ENCODE measurements at regions of chr16 and their contacts with region 1.

Region 1: DNA sequence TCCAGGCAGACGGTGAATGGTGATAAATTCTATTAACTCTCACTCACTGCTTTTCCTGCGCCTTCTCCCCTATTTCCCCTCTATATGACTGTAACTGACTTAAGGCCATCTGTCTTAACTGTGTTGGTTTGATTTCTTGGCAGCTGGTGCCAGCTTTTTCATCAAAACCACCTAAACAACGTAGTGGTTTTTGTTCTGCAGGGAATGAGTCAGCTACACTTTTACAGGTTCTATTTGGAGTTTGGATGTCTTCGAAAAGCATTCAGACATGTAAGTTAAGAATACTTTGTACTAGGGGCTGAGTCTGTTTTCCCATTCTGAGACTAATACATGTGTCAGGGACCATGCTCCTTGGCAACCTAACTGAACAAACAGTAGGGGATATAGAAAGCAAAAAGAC is 8.5 kb downstream of the REXO5 start:
- DNase-seq: peak; percentile 97
- H3K4me3 ChIP-seq: no peak overlapping the region
- H3K27ac ChIP-seq: peak overlapping the region; percentile 44
- H3K4me1 ChIP-seq: peaks cover 11% of the 10 kb centered on the region
- H3K27me3 ChIP-seq: no peaks in the 10 kb centered on the region
- CTCF ChIP-seq: no peak
- POLR2A ChIP-seq: no peak

Region 2: DNA sequence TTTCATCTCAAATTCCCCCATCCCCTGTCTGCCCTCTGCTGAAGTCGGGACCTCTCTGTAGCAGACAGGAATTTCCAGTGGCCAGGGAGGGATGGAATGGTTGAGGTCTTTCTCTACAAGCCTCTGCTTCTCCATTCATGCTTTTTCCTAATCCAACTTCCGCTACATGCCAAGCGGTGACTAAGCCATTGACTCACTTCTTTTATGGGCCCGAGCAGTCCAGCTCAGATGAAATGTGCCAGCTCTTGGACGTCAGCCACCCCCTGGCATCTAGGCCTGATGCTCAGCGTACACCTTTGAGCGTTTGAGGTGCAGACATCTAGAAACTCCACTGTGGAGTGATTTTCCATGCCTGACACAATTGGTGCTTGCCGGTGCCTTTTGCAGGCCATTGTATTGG is 700.4 kb before region 1 on chr16:
- CTCF ChIA-PET with region 1: no interaction called
- POLR2A ChIA-PET with region 1: no interaction called
- dilution Hi-C with region 1: no loop called
- intact Hi-C with region 1: no loop called
- DNase-seq: no peak
- H3K4me3 ChIP-seq: no peak overlapping the region
- H3K27ac ChIP-seq: no peak overlapping the region
- H3K4me1 ChIP-seq: no peaks in the 10 kb centered on the region
- H3K27me3 ChIP-seq: no peaks in the 10 kb centered on the region
- CTCF ChIP-seq: no peak
- POLR2A ChIP-seq: no peak

Region 3: DNA sequence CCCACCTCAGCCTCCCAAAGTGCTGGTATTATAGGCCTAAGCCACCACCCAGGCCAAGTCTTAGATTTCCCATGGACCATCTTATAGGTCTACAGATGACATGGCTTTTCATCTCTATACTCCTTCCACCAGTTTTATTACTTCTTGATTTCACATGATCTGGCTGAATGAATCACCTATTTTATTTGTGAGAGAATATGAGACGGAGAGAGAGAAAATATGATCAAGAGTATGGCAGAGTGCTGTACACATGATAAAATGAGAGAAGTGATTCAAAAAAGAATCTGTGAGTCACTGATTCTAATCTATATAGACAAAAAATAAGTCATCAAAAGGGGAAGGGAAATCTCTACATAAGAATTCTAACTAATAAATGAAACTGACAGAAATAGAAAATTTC is 131.0 kb before region 1 on chr16:
- CTCF ChIA-PET with region 1: no interaction called
- POLR2A ChIA-PET with region 1: no interaction called
- dilution Hi-C with region 1: no loop called
- intact Hi-C with region 1: no loop called
- DNase-seq: no peak
- H3K4me3 ChIP-seq: no peak overlapping the region
- H3K27ac ChIP-seq: no peak overlapping the region
- H3K4me1 ChIP-seq: no peaks in the 10 kb centered on the region
- H3K27me3 ChIP-seq: no peaks in the 10 kb centered on the region
- CTCF ChIP-seq: no peak
- POLR2A ChIP-seq: no peak

Region 4: DNA sequence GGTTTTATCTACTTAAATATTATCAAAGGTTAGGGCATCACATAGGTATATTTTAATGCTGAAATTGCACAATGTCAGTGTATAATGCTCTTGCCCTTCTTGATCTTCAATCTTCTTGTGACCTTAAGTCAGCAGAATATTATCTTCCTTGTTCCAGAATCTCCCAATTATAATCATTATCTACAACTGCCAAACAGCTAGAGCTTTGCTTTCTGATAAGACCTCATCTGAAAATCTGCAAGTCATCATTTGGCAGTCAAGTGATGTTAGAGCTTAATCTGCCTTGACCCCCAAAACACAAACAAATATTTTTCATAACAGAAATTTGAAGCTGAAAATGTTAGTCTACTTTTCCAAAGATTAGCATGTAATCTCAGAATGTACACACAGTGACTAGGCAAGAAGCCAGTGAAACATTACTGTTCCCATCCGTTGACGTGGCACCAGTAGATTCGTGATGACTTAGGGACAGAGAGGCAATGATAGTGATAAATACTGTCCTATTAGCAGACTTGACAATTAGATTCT is 11.3 kb after region 1 on chr16:
- CTCF ChIA-PET with region 1: interaction called, 10 read pairs
- POLR2A ChIA-PET with region 1: no interaction called
- dilution Hi-C with region 1: no loop called
- intact Hi-C with region 1: no loop called
- DNase-seq: no peak
- H3K4me3 ChIP-seq: no peak overlapping the region
- H3K27ac ChIP-seq: no peak overlapping the region
- H3K4me1 ChIP-seq: no peaks in the 10 kb centered on the region
- H3K27me3 ChIP-seq: no peaks in the 10 kb centered on the region
- CTCF ChIP-seq: no peak
- POLR2A ChIP-seq: no peak

Region 5: DNA sequence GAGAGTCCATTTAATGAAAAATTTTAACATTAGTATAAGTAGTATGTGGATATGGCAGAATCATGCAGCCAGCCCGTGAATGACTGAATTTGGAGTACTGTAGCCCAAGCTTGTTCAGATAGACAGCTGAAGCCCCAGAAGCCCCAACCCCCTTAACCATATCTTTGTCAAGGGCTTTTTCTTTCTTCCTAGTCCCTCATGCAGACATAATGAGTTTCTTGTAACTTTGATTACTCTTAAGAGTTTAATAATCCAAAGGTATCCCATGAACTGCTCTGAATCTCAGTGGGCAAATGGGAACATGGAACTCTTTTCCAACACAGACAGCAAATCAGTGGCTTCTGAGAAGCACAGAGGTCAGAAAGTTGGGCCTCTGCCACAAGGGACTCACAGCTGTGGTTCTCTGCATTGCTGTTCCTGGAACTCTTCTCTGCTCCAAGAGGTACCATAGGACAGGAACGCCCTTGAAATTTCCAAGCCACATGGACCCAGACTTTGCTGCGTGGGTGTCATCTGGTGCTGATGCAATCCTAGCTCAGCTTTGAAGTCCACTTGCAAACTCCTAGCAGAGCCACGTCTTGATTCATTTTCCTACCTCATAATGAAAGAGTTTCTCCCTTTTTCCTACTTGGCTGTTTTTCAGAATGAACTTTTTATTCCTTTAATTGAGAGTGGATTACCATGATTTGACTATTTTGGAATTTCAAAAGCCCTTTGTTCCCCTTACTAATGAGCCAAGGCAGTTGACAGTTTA is 103.9 kb after region 1 on chr16:
- CTCF ChIA-PET with region 1: no interaction called
- POLR2A ChIA-PET with region 1: no interaction called
- dilution Hi-C with region 1: no loop called
- intact Hi-C with region 1: no loop called
- DNase-seq: no peak
- H3K4me3 ChIP-seq: no peak overlapping the region
- H3K27ac ChIP-seq: no peak overlapping the region
- H3K4me1 ChIP-seq: peaks cover 6% of the 10 kb centered on the region
- H3K27me3 ChIP-seq: no peaks in the 10 kb centered on the region
- CTCF ChIP-seq: no peak
- POLR2A ChIP-seq: no peak

Measured in endothelial cell of umbilical vein (primary cell).